Gastrocnemius medialis (tissue), 4 donors: ENCODE measurements at regions of chr14 and their contacts with region 1.

Region 1: GRCh38 chr14:77457522-77458290 is at the starts of genes AHSA1 and VIPAS39:
- DNase-seq: peak; percentile 97 to 98
- ATAC-seq: peak; percentile 98 to 99
- H3K4me3 ChIP-seq: peak within 1 kb of the TSS; percentile 90 to 96 (median 94)
- H3K27ac ChIP-seq: peak within 1 kb of the TSS; percentile 89 to 97 (median 95)
- H3K4me1 ChIP-seq: peaks cover 23 to 25% of the 10 kb centered on the region in 2 donors
- H3K27me3 ChIP-seq: no peaks in the 10 kb centered on the region
- CTCF ChIP-seq: peak in 1 of 5 experiments; percentile 8
- POLR2A ChIP-seq: peak; percentile 78 to 82
- total RNA-seq, gene AHSA1: 112 to 200 (median 165) TPM
- total RNA-seq, gene VIPAS39: 8.8 to 19.6 (median 17.6) TPM

Region 2: GRCh38 chr14:76812211-76813044 is 645.3 kb before region 1 on chr14 and contains the start of gene ANGEL1:
- in situ Hi-C with region 1: no loop called
- intact Hi-C with region 1: loop called (anchors 5 kb)
- DNase-seq: peak; percentile 92 to 97
- ATAC-seq: peak; percentile 91
- H3K4me3 ChIP-seq: peak within 1 kb of the TSS; percentile 71 to 91 (median 86)
- H3K27ac ChIP-seq: peak within 1 kb of the TSS; percentile 86 to 92 (median 90)
- H3K4me1 ChIP-seq: peaks cover 8 to 16% of the 10 kb centered on the region in 2 donors
- H3K27me3 ChIP-seq: no peaks in the 10 kb centered on the region
- CTCF ChIP-seq: peak in 2 of 5 experiments; percentile 16 to 38
- POLR2A ChIP-seq: peak; percentile 83 to 94
- total RNA-seq, gene ANGEL1: 8.6 to 16.9 (median 12.7) TPM

Region 3: GRCh38 chr14:77301103-77301502 is 156.6 kb before region 1 on chr14:
- in situ Hi-C with region 1: no loop called
- intact Hi-C with region 1: loop called (anchors 5 kb)
- DNase-seq: peak; percentile 82 to 87
- ATAC-seq: peak; percentile 65 to 73
- H3K4me3 ChIP-seq: peak overlapping the region in 1 of 4 donors; percentile 13
- H3K27ac ChIP-seq: peak overlapping the region; percentile 24 to 97 (median 96)
- H3K4me1 ChIP-seq: peaks cover 46 to 52% of the 10 kb centered on the region in 2 donors
- H3K27me3 ChIP-seq: no peaks in the 10 kb centered on the region
- CTCF ChIP-seq: peak; percentile 80 to 95 (median 86)
- POLR2A ChIP-seq: no peak

Region 4: DNA sequence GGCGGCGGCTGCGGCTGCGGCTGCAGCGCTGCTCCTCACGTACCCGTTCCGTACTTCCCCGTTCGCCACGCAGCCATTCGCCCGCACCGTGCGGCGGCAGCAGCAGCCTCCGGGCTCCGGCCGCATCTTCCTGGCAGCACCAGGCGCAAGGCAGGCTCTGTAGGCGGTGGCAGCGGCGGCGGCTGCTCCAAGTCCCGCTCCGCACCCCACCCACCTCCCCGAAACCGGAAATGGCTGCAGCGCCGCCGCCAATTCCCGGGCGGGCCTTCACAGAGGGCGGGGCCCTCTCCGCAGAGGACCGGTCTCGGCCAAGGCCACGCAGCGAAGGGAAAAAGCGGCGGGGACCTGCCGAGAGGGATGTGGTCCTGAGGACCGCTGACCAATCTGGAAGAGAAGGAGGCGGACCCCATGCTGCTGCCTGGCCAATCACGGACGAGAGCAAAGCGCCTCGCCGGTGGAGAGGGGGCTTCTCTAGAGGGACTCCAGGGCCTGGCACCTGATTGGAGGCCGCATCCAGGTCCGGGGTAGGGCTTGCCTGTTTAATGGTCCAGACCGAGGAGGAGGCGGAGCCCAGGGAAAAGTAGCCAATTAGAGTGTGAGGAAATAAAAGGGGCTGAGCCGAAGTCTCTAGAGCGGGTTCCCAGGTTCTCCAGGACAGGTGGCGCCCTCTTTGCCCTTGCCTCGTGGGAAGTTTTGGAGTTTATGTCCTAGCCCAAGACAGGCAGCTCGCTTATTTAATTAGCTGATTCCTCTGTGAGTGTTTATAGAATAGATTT is 158.9 kb after region 1 on chr14 and contains the start of gene SPTLC2:
- in situ Hi-C with region 1: no loop called
- intact Hi-C with region 1: loop called (anchors 1 kb)
- DNase-seq: peak; percentile 98 to 99
- ATAC-seq: peak; percentile 96 to 97
- H3K4me3 ChIP-seq: peak within 1 kb of the TSS; percentile 71 to 84 (median 80)
- H3K27ac ChIP-seq: peak within 1 kb of the TSS; percentile 67 to 76 (median 74)
- H3K4me1 ChIP-seq: peaks cover 12 to 18% of the 10 kb centered on the region in 2 donors
- H3K27me3 ChIP-seq: no peaks in the 10 kb centered on the region
- CTCF ChIP-seq: peak in 1 of 5 experiments; percentile 2
- POLR2A ChIP-seq: peak; percentile 55 to 73
- total RNA-seq, gene SPTLC2: 6.5 to 10.4 (median 7.0) TPM

Region 5: DNA sequence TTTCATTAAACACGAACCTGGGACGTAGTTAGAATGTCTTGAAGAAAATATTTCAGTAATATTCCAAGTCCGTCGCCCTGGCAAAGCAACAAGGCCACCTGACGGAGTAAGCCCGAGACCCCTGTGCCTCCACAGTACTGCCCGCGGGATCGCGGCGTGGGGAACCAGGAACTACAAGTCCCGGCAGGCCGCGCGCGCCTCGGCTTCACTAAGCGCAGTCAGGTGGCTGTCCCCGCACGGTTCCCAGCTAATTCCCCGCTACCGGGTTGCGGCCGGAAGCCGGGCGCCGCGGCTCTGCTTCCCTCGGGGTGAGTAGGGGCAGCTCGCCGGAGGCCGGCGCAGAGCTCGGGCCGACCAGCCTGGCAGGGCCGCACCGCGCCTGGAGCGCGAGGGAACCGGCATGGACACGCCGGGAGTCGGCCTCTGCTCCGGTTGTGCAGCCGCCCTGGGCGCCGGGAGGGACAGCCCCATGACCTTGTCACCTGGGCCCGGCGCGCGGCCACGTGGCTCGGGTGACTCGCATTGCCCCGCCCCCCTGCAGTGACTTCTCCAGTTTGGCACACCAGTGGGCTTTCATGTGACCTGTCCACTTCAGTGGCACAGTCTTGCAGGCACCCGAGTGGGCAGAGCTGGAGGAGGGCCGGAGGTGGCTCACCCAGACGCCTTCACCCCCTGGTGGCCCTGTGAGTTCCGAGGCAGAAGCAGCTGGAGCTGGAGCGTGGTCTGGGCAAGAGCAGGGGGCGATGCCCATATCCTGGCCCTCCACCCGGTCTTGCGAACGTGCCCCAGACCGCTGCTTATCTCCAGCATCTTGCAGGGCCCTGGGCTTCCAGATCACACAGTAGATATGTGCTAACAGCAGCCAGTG is 342.4 kb after region 1 on chr14 and contains the start of gene ADCK1:
- in situ Hi-C with region 1: no loop called
- intact Hi-C with region 1: loop called (anchors 1 kb)
- DNase-seq: peak; percentile 86 to 97
- ATAC-seq: peak; percentile 93 to 96
- H3K4me3 ChIP-seq: peak within 1 kb of the TSS; percentile 66 to 94 (median 89)
- H3K27ac ChIP-seq: peak within 1 kb of the TSS; percentile 87 to 98 (median 96)
- H3K4me1 ChIP-seq: peaks cover 12 to 14% of the 10 kb centered on the region in 2 donors
- H3K27me3 ChIP-seq: no peaks in the 10 kb centered on the region
- CTCF ChIP-seq: peak; percentile 32 to 52 (median 41)
- POLR2A ChIP-seq: peak; percentile 75 to 83
- total RNA-seq, gene ADCK1: 3.5 to 11.0 (median 5.5) TPM